Dorsolateral prefrontal cortex (tissue), 120 donors: ENCODE measurements at regions of chr9 and their contacts with region 1.

Region 1: DNA sequence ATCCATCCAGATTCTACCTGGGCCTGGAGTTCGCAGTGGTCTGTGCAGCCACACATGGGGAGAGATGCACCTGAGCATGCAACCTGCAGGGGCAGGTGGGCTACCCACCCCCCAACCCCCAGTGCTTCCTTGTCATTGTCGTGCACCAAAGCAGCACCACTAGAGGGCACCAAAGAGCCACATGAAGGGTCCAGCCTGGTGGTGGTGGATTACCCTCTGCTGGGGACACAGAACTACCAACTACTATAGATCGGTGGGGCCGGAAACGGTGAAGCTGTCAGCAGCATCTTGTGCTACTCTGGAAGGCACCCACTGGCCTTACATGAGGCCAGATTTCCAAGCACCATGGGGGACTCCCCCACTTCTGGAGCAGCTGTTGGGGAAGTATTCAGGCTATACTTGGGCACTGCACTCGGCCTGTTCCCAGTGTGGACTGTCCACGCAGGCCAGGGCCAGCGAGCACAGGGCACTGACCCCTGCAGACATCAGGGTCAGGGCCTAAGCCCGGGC is 60.2 kb upstream of the TBC1D2 start:
- DNase-seq: peak in 9 of 10 donors; percentile 64 to 88 (median 77)
- H3K4me3 ChIP-seq: no peak overlapping the region
- H3K27ac ChIP-seq: no peak overlapping the region
- H3K27me3 ChIP-seq: no peaks in the 10 kb centered on the region
- CTCF ChIP-seq: peak; percentile 62 to 93 (median 83)

Region 2: GRCh38 chr9:97666907-97667686 is 648.5 kb before region 1 on chr9:
- intact Hi-C with region 1: no loop called
- DNase-seq: no peak
- H3K4me3 ChIP-seq: no peak overlapping the region
- H3K27ac ChIP-seq: peak overlapping the region in 2 of 59 donors; percentile 16 to 20
- H3K27me3 ChIP-seq: no peaks in the 10 kb centered on the region
- CTCF ChIP-seq: no peak

Region 3: GRCh38 chr9:98333703-98334582 is 18.3 kb after region 1 on chr9:
- intact Hi-C with region 1: no loop called
- DNase-seq: no peak
- H3K4me3 ChIP-seq: no peak overlapping the region
- H3K27ac ChIP-seq: no peak overlapping the region
- H3K27me3 ChIP-seq: no peaks in the 10 kb centered on the region
- CTCF ChIP-seq: no peak

Region 4: GRCh38 chr9:98707166-98708102 is 391.8 kb after region 1 on chr9:
- intact Hi-C with region 1: loop called in 1 of 2 experiments (anchors 5 kb)
- DNase-seq: peak in 8 of 10 donors; percentile 47 to 89 (median 68)
- H3K4me3 ChIP-seq: peak overlapping the region; percentile 15 to 74 (median 57)
- H3K27ac ChIP-seq: peak overlapping the region in 57 of 59 donors; percentile 4 to 88 (median 75)
- H3K27me3 ChIP-seq: peaks cover 0 to 79% (median 22%) of the 10 kb centered on the region in 45 donors
- CTCF ChIP-seq: peak in 53 of 56 donors; percentile 18 to 67 (median 49)

Region 5: GRCh38 chr9:98726735-98727134 is 411.1 kb after region 1 on chr9:
- intact Hi-C with region 1: loop called in 1 of 2 experiments (anchors 10 kb)
- DNase-seq: peak in 2 of 10 donors; percentile 25 to 52
- H3K4me3 ChIP-seq: peak overlapping the region in 23 of 59 donors; percentile 0 to 46 (median 24)
- H3K27ac ChIP-seq: peak overlapping the region in 33 of 59 donors; percentile 0 to 83 (median 44)
- H3K27me3 ChIP-seq: peaks cover 0 to 2% (median 0%) of the 10 kb centered on the region in 45 donors
- CTCF ChIP-seq: no peak

Region 6: DNA sequence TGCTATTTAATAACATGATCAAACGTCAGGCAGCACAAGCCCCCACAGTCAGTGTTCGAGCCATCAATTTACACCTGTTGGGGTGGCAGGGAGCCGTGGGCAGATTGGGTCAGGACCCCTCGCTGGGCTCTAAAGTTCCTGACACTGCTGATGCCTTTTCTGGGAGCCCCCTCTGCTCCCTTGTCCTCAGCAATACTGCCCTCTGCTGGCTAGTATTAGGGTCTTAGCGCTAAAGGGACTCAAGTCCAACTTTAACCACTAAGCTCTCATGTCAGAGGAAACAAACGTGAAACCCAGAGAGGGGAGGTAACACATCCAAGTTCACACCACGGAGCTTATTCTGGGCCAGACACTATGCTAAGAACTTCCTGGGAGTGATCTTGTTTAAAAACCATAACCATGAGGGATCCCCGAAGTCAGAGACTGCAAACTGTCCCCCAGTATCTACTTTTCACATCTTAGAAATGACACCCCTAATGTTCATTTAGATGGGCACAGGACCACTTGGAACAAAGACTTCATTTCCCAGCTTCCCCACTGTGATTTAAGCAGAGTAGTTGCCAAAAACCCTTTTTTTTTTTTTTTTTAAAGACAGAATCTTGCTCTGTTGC is 460.3 kb after region 1 on chr9:
- intact Hi-C with region 1: loop called (anchors 5 kb)
- DNase-seq: peak in 2 of 10 donors; percentile 39 to 70
- H3K4me3 ChIP-seq: no peak overlapping the region
- H3K27ac ChIP-seq: no peak overlapping the region
- H3K27me3 ChIP-seq: no peaks in the 10 kb centered on the region
- CTCF ChIP-seq: peak; percentile 41 to 80 (median 64)

Region 7: GRCh38 chr9:98791147-98792095 is 475.8 kb after region 1 on chr9:
- intact Hi-C with region 1: loop called (anchors 5 kb)
- DNase-seq: peak; percentile 64 to 88 (median 76)
- H3K4me3 ChIP-seq: peak overlapping the region in 1 of 59 donors; percentile 22
- H3K27ac ChIP-seq: peak overlapping the region in 19 of 59 donors; percentile 4 to 75 (median 37)
- H3K27me3 ChIP-seq: no peaks in the 10 kb centered on the region
- CTCF ChIP-seq: peak; percentile 92 to 100 (median 98)